GM10248 (cell line): ENCODE measurements at regions of chr3 and their contacts with region 1.

Region 1: DNA sequence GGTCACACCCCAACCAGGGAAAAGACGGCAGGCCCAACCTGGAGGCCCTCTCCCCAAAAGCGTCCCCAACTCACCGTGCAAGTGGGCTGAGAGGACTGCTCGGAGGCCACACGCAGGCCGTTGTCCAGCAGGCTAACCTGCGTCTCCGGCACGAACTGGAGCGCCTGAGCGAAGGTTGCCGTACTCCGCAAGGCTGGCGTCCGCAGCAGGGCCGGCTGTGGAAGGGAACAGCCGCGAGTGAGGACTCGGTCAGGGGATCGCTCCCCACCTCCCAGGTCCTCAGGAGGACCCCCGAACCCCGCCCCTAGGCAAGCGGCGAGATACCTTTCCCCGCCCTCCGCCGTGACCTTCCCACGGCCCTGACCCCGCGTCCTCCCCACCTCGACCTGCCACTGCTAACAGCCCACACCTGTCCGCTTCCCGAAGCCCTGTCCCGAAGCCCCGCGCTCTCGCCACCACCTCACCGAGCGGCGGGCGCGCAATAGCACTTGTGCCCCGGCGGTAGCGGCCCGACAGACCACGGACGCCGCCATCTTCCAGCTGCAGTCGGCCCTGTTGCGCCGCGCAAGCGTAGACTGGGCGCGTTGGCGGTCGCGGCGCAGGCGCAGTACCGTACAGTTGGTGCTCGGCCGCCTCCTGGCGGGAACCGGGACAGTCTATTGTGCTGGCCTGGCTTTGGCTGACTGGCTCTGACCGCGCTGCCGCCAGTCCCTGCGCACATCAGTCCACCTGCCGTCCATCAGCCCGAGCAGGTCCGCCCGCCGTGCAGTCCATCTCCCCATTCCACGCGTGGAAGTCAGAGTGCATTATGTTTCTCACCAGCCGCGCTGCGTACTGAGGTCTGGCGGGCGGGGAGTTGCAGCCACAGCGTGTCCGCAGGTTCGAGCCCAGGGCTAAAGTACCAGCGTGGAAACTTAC is at the start of gene UQCRC1:
- DNase-seq: peak; percentile 99
- CTCF ChIP-seq: peak; percentile 68

Region 2: DNA sequence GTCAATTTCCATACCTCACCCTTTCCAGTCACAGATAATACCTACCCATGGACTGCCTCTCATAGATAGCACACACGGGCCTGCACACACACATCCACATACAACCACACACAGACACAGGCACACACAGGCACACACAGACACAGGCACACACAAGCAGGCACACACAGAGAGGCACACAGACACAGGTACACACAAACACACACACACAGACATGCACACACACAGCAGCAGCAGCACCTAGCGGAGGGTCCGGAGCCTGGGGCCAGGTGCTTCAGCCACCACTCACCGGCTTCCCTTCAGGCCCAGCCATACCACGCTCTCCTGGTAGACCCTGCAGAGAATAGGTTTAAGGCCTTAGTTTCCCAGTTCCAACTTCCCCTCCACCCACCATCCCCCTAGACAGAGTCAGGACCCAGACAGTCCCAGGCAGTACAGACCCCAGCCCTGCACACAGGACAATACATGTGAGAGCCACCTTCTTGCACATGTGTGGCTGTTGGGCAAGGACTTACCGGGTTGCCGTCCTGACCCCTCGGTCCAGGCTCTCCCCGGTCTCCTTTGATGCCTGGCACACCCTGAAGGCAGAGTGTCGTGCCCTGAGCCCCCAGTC is 35.3 kb before region 1 on chr3:
- CTCF ChIA-PET with region 1: no interaction called
- POLR2A ChIA-PET with region 1: no interaction called
- DNase-seq: no peak
- CTCF ChIP-seq: no peak

Region 3: DNA sequence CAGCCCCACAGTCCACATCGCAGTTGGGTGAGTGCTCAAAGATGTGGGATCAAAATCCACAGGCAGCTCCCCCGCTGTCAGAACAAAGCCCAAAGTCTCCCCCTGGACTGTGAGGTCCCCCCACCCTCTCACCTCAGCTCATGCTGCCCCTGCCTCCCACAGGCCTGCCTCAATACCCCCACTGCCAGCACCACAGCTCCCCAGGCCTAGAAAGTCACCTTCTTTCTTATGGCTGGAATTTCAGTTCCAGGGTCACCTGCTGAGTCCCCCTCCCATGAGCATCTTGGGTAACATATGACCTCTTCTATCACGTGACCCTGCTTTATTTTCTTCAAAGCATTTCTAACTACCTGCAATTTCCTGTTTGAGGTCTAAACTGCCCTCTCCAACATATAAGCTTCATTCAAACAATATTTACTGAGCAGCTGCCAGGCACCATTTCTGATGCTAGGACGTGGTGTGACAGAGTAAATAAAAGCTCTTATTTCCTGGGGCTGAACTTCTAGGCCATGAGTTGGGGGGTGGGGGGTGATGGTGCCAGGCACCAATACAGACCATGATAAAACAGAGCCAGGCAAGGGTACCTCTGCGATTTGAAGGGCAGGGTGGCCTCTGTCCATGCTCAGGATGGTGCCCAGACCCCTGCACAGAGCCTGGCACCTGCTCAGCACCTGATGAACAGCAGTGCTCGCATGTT is 14.7 kb after region 1 on chr3:
- CTCF ChIA-PET with region 1: interaction called, 12 read pairs
- POLR2A ChIA-PET with region 1: no interaction called
- DNase-seq: no peak
- CTCF ChIP-seq: no peak